ENCODE measurements at regions of chr1 and their contacts with region 1.

Region 1: GRCh38 chr1:89632657-89633247 is at the start of gene LRRC8C:
- DNase-seq: peak; percentile 87
- CTCF ChIP-seq: peak; percentile 83

Region 2: GRCh38 chr1:89444791-89445190 is 188.0 kb before region 1 on chr1:
- CTCF ChIA-PET with region 1: no interaction called
- POLR2A ChIA-PET with region 1: no interaction called
- DNase-seq: no peak
- CTCF ChIP-seq: no peak

Region 3: DNA sequence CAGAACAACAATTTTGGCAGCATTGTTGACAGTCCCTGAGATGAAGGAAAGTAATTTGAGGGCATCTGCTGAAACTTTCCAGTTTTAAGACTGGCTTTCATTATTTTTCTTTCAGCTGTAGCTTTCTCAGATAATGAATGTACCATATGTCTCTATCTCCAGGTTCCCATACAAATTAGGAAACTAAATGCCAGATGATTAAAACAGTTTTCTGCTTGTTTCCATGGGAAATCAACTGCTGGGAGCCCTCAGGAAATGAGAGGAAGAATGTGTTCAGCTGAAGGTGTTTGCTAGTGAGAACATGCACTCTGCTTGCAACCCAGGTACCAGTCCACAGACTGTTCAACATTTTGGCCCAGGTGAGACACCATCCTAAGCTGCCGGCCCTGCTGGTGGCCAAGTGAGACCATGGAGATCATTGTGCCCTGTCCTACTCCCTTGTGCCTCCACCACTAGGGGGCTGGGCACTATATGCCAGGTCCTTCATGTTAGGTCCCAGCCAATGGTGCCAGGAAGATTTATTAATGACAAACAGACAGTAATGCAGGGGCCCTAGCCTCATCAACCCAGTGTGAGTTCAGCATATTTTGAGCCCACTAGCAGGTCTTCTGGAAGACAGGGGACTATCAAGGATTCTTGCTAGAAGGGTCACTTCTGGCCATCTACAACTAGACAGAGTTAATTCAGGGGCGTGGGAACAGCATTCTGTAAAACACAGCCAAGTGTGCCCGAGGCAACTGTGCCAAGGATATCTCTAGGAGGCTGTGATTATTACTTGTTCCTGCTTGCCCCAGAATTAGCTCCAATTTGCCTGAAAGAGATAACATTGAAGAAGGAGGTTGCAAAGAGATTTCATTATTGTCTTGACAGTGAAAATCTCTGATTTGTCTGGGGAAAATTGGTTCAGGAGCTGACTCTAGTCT is 16.8 kb before region 1 on chr1:
- CTCF ChIA-PET with region 1: interaction called, 47 read pairs
- POLR2A ChIA-PET with region 1: no interaction called
- DNase-seq: no peak
- CTCF ChIP-seq: peak; percentile 15

Region 4: GRCh38 chr1:89649783-89650182 is 17.0 kb after region 1 on chr1:
- CTCF ChIA-PET with region 1: interaction called, 18 read pairs
- POLR2A ChIA-PET with region 1: no interaction called
- DNase-seq: no peak
- CTCF ChIP-seq: no peak

Region 5: GRCh38 chr1:89657886-89658285 is 25.1 kb after region 1 on chr1:
- CTCF ChIA-PET with region 1: interaction called, 18 read pairs
- POLR2A ChIA-PET with region 1: no interaction called
- DNase-seq: peak; percentile 10
- CTCF ChIP-seq: no peak